ENCODE measurements at regions of chr17 and their contacts with region 1.

Region 1: GRCh38 chr17:74987418-74987908 is at the start of gene CDR2L:
- DNase-seq: peak; percentile 99
- ATAC-seq: peak; percentile 93
- total RNA-seq, gene CDR2L: 18.4 TPM

Region 2: GRCh38 chr17:75034236-75034908 is 46.9 kb after region 1 on chr17:
- intact Hi-C with region 1: loop called (anchors 10 kb)
- DNase-seq: peak; percentile 89
- ATAC-seq: peak; percentile 80

Measured in Right ventricle myocardium superior (tissue), 1 donor.